ENCODE measurements at regions of chr3 and their contacts with region 1.

Region 1: GRCh38 chr3:87167628-87168456 is 59.3 kb upstream of the CHMP2B start:
- DNase-seq: peak; percentile 2 to 65
- ATAC-seq: peak; percentile 74 to 83; a peak in 5 of 6 replicates
- H3K4me3 ChIP-seq: peak overlapping the region; percentile 35
- H3K27ac ChIP-seq: peak overlapping the region; percentile 39 to 58; a peak in 4 of 6 replicates
- H3K4me1 ChIP-seq: peaks cover 3% of the 10 kb centered on the region; the same call in 1 of the 3 replicates
- CTCF ChIP-seq: peak; percentile 78
- EP300 ChIP-seq: no peak
- POLR2A ChIP-seq: no peak
- RAD21 ChIP-seq: peak; percentile 73 to 78

Region 2: DNA sequence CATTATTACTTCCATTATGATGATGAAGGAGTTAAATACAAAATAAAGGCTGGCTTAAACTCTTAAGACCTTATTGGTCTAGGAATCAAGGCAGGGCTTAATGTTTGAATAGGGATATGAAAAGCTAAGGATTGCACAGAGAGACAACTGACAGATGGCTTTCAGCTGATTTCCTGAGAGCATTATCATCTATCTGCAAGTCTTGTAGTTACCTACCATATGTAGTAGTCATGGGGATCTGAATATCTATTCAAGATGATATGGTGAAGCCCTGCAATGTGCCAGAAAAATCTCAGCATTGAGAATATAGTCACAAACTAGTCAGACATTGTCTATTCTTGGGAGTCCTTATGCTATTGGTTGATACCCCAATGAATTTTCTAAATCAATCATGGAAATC is 11.8 kb after region 1 on chr3:
- CTCF ChIA-PET with region 1: interaction called, 25 read pairs
- POLR2A ChIA-PET with region 1: no interaction called
- DNase-seq: no peak
- ATAC-seq: no peak
- H3K4me3 ChIP-seq: no peak overlapping the region
- H3K27ac ChIP-seq: no peak overlapping the region
- H3K4me1 ChIP-seq: no peaks in the 10 kb centered on the region
- CTCF ChIP-seq: no peak
- EP300 ChIP-seq: no peak
- POLR2A ChIP-seq: no peak
- RAD21 ChIP-seq: no peak

Region 3: GRCh38 chr3:87225659-87226058 is 57.8 kb after region 1 on chr3:
- CTCF ChIA-PET with region 1: interaction called, 10 read pairs
- POLR2A ChIA-PET with region 1: no interaction called
- DNase-seq: no peak
- ATAC-seq: no peak
- H3K4me3 ChIP-seq: no peak overlapping the region
- H3K27ac ChIP-seq: no peak overlapping the region
- H3K4me1 ChIP-seq: peaks cover 23% of the 10 kb centered on the region
- CTCF ChIP-seq: no peak
- EP300 ChIP-seq: no peak
- POLR2A ChIP-seq: no peak
- RAD21 ChIP-seq: no peak